ENCODE measurements at regions of chr6 and their contacts with region 1.

Region 1: GRCh38 chr6:109095027-109095834 is at the start of gene CEP57L1:
- DNase-seq: peak; percentile 89 to 98 (median 92)
- ATAC-seq: peak; percentile 81
- H3K4me3 ChIP-seq: peak within 1 kb of the TSS; percentile 80
- H3K4me3 Mint-ChIP-seq: peak within 1 kb of the TSS; percentile 96
- H3K27ac ChIP-seq: peak within 1 kb of the TSS; percentile 95 to 98
- H3K27ac Mint-ChIP-seq: peak within 1 kb of the TSS; percentile 98
- H3K4me1 ChIP-seq: peaks cover 15% of the 10 kb centered on the region
- H3K4me1 Mint-ChIP-seq: peaks cover 56% of the 10 kb centered on the region
- H3K27me3 ChIP-seq: no peaks in the 10 kb centered on the region
- H3K27me3 Mint-ChIP-seq: no peaks in the 10 kb centered on the region
- CTCF ChIP-seq: no peak
- total RNA-seq, gene CEP57L1: 3.8 to 4.8 TPM

Region 2: DNA sequence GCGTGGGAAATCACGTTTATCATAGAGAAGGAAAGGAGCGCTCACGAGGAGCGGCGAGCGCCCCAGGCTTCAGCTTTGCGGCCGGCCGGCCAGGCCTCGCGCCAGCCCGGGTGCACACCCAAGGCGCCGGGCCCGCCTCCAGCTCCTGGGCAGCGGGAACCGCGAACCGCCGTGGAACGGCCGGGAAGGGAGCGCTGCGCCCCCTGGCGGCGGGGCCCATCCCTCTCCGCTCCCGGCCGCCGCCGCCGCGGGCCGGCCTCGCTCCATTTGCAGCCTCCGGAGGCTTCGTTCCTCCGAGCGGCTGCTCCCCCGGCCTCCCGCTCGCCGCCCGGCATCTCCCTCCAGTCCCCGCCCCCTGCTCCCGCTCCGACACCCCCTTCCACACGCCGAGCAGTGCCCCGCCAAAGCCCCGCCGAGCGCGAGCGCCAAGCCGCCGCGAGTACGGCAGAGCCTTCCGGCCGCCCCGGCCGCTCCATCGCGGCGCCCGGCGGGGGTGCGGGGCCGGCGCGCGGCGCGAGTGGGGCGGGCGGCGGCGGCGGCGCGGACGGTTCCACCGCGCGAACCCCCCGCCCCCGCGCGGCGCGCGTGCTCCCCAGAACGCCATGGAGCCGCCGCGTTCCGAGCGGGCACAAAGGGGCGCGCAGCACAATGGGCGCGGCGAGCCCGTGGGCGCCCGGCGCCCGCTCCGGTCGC is 1980.9 kb before region 1 on chr6:
- CTCF ChIA-PET with region 1: no interaction called
- POLR2A ChIA-PET with region 1: no interaction called
- intact Hi-C with region 1: loop called in 1 of 2 experiments (anchors 10 kb)
- DNase-seq: peak; percentile 33 to 88 (median 60)
- ATAC-seq: peak; percentile 56
- H3K4me3 ChIP-seq: peak overlapping the region; percentile 26
- H3K4me3 Mint-ChIP-seq: peak overlapping the region; percentile 91
- H3K27ac ChIP-seq: no peak overlapping the region
- H3K27ac Mint-ChIP-seq: no peak overlapping the region
- H3K4me1 ChIP-seq: peaks cover 21% of the 10 kb centered on the region
- H3K4me1 Mint-ChIP-seq: peaks cover 18% of the 10 kb centered on the region
- H3K27me3 ChIP-seq: peaks cover 0 to 4% of the 10 kb centered on the region in 2 experiments
- H3K27me3 Mint-ChIP-seq: no peaks in the 10 kb centered on the region
- CTCF ChIP-seq: peak; percentile 69

Region 3: DNA sequence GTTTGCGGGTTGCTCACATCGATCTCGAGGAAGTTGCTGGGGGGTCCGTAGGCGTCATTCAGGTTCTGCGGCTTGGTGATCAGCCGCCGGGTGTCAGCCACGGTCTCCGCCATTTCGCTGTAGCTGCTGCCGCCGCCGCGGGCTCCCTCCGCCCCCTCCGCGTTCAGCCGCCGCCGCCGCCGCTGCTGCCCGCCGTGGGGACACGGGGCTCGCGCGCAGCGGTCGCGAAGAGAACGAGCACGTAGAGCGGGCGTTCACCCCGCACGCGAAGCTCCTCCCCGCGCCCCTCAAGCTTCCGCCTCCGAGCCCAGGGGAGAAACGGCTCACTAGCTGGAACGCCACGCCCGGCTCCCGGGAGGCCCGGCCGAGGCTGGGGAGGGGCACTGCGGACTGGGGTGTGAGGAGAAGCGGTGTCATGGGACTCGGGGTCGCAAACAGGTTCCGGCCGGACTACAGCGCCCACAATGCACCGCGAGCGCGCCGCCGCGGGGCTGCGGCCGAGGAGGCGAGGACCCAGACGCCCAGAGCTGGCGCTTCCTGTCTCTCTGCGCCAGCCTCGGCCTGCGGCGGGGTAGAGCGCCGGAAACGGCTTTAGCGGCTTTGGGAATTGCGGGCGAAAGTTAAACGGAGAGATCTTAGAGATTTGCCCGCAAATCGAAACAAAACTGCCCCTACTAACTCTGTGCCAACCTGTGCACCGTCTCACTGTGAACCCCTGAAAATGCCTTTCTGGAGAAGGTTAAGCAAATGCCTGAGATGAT is 834.2 kb before region 1 on chr6 and contains the start of gene SNX3:
- CTCF ChIA-PET with region 1: no interaction called
- POLR2A ChIA-PET with region 1: interaction called, 17 read pairs
- intact Hi-C with region 1: loop called in 1 of 2 experiments (anchors 5 kb)
- DNase-seq: peak; percentile 71 to 95 (median 83)
- ATAC-seq: peak; percentile 80
- H3K4me3 ChIP-seq: peak within 1 kb of the TSS; percentile 98
- H3K4me3 Mint-ChIP-seq: peak within 1 kb of the TSS; percentile 88
- H3K27ac ChIP-seq: peak within 1 kb of the TSS; percentile 88 to 90
- H3K27ac Mint-ChIP-seq: peak within 1 kb of the TSS; percentile 91
- H3K4me1 ChIP-seq: peaks cover 34% of the 10 kb centered on the region
- H3K4me1 Mint-ChIP-seq: peaks cover 36% of the 10 kb centered on the region
- H3K27me3 ChIP-seq: no peaks in the 10 kb centered on the region
- H3K27me3 Mint-ChIP-seq: no peaks in the 10 kb centered on the region
- CTCF ChIP-seq: no peak
- total RNA-seq, gene SNX3: 39.8 to 40.8 TPM

Region 4: DNA sequence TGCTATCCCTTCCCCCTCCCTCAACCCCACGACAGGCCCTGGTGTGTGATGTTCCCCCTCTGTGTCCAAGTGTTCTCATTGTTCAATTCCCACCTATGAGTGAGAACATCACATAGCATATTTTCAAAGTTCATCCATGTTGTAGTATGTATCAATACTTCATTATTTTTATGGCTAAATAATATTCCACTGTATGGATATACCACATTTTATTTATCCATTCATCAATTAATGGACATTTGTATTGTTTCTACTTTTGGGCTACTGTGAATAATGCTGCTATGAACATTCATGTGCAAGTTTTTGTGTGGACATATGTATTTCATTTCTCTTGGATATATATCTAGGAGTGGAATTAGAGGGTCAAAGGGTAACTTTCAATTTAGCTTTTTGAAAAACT is 305.8 kb before region 1 on chr6:
- CTCF ChIA-PET with region 1: no interaction called
- POLR2A ChIA-PET with region 1: no interaction called
- intact Hi-C with region 1: no loop called
- DNase-seq: no peak
- ATAC-seq: no peak
- H3K4me3 ChIP-seq: no peak overlapping the region
- H3K4me3 Mint-ChIP-seq: no peak overlapping the region
- H3K27ac ChIP-seq: no peak overlapping the region
- H3K27ac Mint-ChIP-seq: no peak overlapping the region
- H3K4me1 ChIP-seq: no peaks in the 10 kb centered on the region
- H3K4me1 Mint-ChIP-seq: no peaks in the 10 kb centered on the region
- H3K27me3 ChIP-seq: no peaks in the 10 kb centered on the region
- H3K27me3 Mint-ChIP-seq: no peaks in the 10 kb centered on the region
- CTCF ChIP-seq: no peak

Region 5: DNA sequence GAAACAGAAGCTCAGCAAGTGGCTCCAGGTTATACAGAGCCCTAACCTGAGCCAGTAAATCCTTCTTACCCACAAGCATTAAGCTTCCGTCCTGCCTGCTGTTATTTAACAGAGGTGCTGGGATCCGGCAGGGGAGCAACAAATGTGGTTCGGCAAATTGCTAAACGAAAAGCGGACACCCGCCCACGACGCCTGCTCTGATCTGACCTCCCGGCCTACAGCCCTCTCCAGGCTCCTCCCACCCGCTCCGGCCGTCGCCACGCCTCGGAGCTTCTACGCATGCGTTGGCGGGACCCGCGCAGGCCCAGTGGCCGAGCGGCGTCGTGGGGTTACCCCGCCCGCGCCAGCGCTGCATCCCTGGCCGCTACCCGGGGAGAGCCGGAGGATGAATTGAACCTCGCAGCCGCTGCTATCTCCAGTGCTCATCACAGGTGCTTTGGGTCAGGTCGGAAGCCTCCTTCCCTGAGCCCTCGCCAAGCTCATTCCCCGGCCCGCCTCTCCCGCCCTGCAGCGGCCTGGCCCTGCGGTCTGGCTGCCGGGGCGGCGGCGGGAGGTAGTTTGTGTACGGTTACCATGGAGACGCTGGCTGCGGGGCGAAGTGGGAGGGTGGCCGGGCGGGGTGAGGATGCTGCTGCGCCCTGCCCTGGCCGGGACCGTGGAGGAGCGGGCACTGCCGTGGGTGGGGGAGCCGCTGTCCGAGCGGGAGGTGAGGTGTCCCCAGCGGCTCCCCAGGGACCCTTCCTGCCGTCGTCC is 246.9 kb before region 1 on chr6 and contains the start of gene ARMC2:
- CTCF ChIA-PET with region 1: no interaction called
- POLR2A ChIA-PET with region 1: interaction called, 26 read pairs
- intact Hi-C with region 1: loop called in 1 of 2 experiments (anchors 5 kb)
- DNase-seq: peak; percentile 69 to 94 (median 80)
- ATAC-seq: peak; percentile 78
- H3K4me3 ChIP-seq: peak within 1 kb of the TSS; percentile 67
- H3K4me3 Mint-ChIP-seq: peak within 1 kb of the TSS; percentile 92
- H3K27ac ChIP-seq: peak within 1 kb of the TSS; percentile 54 to 61
- H3K27ac Mint-ChIP-seq: peak within 1 kb of the TSS; percentile 88
- H3K4me1 ChIP-seq: peaks cover 16% of the 10 kb centered on the region
- H3K4me1 Mint-ChIP-seq: peaks cover 35% of the 10 kb centered on the region
- H3K27me3 ChIP-seq: no peaks in the 10 kb centered on the region
- H3K27me3 Mint-ChIP-seq: no peaks in the 10 kb centered on the region
- CTCF ChIP-seq: no peak
- total RNA-seq, gene ARMC2: 5.2 to 5.7 TPM

Region 6: DNA sequence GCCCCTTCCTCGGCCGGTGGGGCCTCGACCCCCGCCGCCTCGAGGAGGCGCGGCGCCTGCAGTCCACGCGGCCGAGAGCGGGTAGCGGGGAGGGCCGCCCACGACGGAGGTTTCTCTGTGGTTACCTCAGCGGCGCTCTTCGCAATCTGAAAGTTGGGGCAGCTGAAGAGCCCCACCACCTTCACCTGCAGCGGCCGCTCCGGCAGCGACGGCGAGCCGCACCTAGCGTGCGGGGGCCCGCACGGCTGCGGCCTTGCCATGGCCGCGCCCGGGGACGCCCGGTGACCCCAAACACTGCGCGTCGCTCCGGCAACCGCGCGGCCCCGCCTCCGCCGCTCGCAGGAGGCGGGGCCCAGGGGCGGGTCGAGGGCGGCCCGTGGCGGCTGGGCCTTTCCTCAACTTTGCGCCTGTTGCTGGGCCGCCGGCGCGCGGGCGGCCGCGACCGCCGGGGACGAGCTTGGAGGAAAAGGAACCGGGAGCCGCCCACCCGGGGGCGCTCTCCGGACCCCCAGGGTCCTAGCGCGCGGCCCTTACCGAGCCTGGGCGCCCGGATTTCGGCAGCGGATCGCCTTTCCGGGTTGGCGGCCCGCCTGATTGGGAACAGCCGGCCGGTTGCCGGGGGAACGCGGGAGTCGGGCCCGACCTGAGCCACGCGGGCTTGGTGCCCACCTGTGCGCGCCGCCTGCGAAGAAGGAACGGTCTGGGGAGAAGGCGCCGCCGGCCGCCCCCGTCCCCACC is 345.3 kb after region 1 on chr6 and contains the starts of genes PPIL6 and SMPD2:
- CTCF ChIA-PET with region 1: no interaction called
- POLR2A ChIA-PET with region 1: interaction called, 6 read pairs
- intact Hi-C with region 1: loop called in 1 of 2 experiments (anchors 5 kb)
- DNase-seq: peak; percentile 54 to 92 (median 73)
- ATAC-seq: peak; percentile 75
- H3K4me3 ChIP-seq: peak within 1 kb of the TSS; percentile 81
- H3K4me3 Mint-ChIP-seq: peak within 1 kb of the TSS; percentile 95
- H3K27ac ChIP-seq: peak within 1 kb of the TSS; percentile 74 to 82
- H3K27ac Mint-ChIP-seq: peak within 1 kb of the TSS; percentile 93
- H3K4me1 ChIP-seq: peaks cover 39% of the 10 kb centered on the region
- H3K4me1 Mint-ChIP-seq: peaks cover 27% of the 10 kb centered on the region
- H3K27me3 ChIP-seq: no peaks in the 10 kb centered on the region
- H3K27me3 Mint-ChIP-seq: no peaks in the 10 kb centered on the region
- CTCF ChIP-seq: peak; percentile 4
- total RNA-seq, gene PPIL6: 0.84 to 1.3 TPM
- total RNA-seq, gene SMPD2: 25.7 to 27.3 TPM

Region 7: DNA sequence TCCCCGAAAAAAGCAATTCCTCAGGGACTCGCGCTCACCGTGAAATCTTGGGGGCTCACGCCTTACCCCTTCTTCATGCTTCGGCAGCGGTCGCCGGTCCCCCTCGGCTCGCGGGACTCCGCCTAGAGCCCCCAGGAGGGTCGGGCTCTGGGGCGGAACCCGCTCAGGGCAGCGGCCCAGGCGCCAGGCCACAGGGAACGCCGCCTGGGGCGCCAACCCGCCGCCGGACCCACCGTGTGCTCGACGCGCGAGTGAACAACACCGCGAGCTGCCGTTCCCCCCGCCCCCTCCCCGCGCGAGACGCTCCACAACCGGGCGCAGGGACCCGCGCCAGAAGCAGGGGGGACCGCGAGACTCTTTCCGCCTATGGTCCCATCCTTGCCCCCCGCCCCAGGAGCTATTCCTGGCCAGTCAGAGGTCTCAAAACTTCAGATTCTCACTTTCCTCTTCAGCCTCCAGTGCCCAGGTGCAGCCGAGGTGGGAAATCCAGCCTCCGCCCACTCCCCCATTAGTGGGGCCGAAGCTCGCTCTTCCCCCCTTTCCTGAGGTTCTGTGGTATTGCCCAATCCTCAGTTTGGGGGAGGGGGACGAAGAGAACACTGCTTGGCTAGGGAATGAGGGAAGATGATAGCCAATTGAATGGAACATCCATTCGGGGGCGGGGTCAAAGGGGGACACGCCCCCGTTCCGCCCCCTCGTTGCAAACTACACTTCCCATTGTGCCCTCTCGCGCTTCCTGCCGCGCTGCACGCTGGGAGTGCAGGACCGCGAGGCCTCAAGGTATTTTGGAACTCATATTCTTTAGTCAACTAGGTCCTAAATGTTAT is 1084.4 kb after region 1 on chr6 and contains the start of gene WASF1:
- CTCF ChIA-PET with region 1: interaction called, 4 read pairs
- POLR2A ChIA-PET with region 1: interaction called, 5 read pairs
- intact Hi-C with region 1: loop called in 1 of 2 experiments (anchors 10 kb)
- DNase-seq: peak; percentile 78 to 96 (median 86)
- ATAC-seq: peak; percentile 89
- H3K4me3 ChIP-seq: peak within 1 kb of the TSS; percentile 95
- H3K4me3 Mint-ChIP-seq: peak within 1 kb of the TSS; percentile 84
- H3K27ac ChIP-seq: peak within 1 kb of the TSS; percentile 74 to 78
- H3K27ac Mint-ChIP-seq: peak within 1 kb of the TSS; percentile 16
- H3K4me1 ChIP-seq: peaks cover 28% of the 10 kb centered on the region
- H3K4me1 Mint-ChIP-seq: peaks cover 12% of the 10 kb centered on the region
- H3K27me3 ChIP-seq: peaks cover 0 to 9% of the 10 kb centered on the region in 2 experiments
- H3K27me3 Mint-ChIP-seq: peaks cover 10% of the 10 kb centered on the region
- CTCF ChIP-seq: no peak
- total RNA-seq, gene WASF1: 0.19 to 0.22 TPM

Measured in CD4-positive, alpha-beta T cell (primary cell).